ENCODE measurements at regions of chr5 and their contacts with region 1.

Region 1: DNA sequence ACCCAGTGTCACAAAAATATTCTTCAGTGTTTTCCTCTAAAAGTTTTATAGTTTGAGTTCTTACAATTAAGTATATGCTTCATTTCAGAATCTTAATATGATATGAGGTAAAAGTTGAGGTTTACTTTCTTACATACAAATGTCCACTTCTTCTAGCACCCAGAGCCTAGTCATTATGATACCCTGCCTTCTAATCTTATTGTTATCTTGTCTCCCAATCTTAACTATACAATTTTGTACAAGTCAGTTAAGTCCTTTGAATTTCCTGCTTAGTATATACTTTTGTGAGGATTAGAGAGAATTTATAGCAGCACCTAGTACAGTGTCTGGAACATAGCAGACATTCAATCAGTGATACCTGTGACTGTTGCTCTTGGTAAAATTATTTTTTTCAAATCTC is 29.3 kb downstream of the RAD50 start:
- DNase-seq: no peak
- H3K4me3 Mint-ChIP-seq: no peak overlapping the region
- H3K27ac Mint-ChIP-seq: no peak overlapping the region
- H3K4me1 Mint-ChIP-seq: peaks cover 4% of the 10 kb centered on the region
- H3K27me3 Mint-ChIP-seq: no peaks in the 10 kb centered on the region

Region 2: GRCh38 chr5:132622608-132623007 is 36.5 kb after region 1 on chr5:
- CTCF ChIA-PET with region 1: no interaction called
- POLR2A ChIA-PET with region 1: no interaction called
- intact Hi-C with region 1: loop called (anchors 5 kb)
- DNase-seq: no peak
- H3K4me3 Mint-ChIP-seq: no peak overlapping the region
- H3K27ac Mint-ChIP-seq: no peak overlapping the region
- H3K4me1 Mint-ChIP-seq: peaks cover 13% of the 10 kb centered on the region
- H3K27me3 Mint-ChIP-seq: no peaks in the 10 kb centered on the region

Measured in activated CD4-positive, alpha-beta memory T cell treated with anti-CD3 and anti-CD28 coated beads for 36 hours (primary cell).